Stomach (tissue), 19 donors: ENCODE measurements at regions of chr11 and their contacts with region 1.

Region 1: DNA sequence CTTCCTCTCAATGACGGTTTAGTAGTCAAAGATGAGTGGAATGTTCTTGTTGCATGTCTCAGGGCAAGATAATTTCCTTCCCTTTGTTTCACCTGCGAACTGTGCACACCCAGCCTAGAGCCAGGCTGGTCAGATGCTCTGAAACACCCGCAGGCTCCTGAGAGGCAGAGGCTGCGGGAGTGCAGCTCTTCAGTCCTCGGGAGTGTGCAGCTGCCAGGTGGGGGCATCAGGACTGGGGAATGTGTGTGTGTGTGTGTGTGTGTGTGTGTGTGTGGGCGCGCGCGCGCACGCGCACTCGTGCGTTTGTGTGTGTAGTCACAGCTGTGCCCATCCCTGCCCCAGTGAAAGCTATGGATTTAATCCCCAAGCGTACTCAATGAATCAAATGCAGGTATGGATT is 136.2 kb upstream of the NTM start:
- DNase-seq: no peak
- H3K4me3 ChIP-seq: no peak overlapping the region
- H3K27ac ChIP-seq: no peak overlapping the region
- H3K4me1 ChIP-seq: no peaks in the 10 kb centered on the region
- H3K27me3 ChIP-seq: peaks cover 0 to 20% (median 0%) of the 10 kb centered on the region in 3 donors
- CTCF ChIP-seq: no peak
- EP300 ChIP-seq: no peak
- POLR2A ChIP-seq: no peak

Region 2: GRCh38 chr11:131534611-131535010 is 300.4 kb after region 1 on chr11:
- intact Hi-C with region 1: loop called (anchors 10 kb)
- DNase-seq: no peak
- H3K4me3 ChIP-seq: no peak overlapping the region
- H3K27ac ChIP-seq: no peak overlapping the region
- H3K4me1 ChIP-seq: no peaks in the 10 kb centered on the region
- H3K27me3 ChIP-seq: no peaks in the 10 kb centered on the region
- CTCF ChIP-seq: no peak
- EP300 ChIP-seq: no peak
- POLR2A ChIP-seq: no peak